Activated CD4-positive, alpha-beta T cell treated with anti-CD3 and anti-CD28 coated beads, Interleukin-2, amount 10 ng/mL, durations not matched to agents 24 days and 14 days (primary cell): ENCODE measurements at regions of chr7 and their contacts with region 1.

Region 1: GRCh38 chr7:7761340-7761980 is 43.1 kb upstream of the RPA3 start:
- DNase-seq: peak; percentile 59
- H3K4me3 Mint-ChIP-seq: peak overlapping the region; percentile 92
- H3K27ac Mint-ChIP-seq: peak overlapping the region; percentile 88
- H3K4me1 Mint-ChIP-seq: peaks cover 30% of the 10 kb centered on the region
- H3K27me3 Mint-ChIP-seq: no peaks in the 10 kb centered on the region

Region 2: DNA sequence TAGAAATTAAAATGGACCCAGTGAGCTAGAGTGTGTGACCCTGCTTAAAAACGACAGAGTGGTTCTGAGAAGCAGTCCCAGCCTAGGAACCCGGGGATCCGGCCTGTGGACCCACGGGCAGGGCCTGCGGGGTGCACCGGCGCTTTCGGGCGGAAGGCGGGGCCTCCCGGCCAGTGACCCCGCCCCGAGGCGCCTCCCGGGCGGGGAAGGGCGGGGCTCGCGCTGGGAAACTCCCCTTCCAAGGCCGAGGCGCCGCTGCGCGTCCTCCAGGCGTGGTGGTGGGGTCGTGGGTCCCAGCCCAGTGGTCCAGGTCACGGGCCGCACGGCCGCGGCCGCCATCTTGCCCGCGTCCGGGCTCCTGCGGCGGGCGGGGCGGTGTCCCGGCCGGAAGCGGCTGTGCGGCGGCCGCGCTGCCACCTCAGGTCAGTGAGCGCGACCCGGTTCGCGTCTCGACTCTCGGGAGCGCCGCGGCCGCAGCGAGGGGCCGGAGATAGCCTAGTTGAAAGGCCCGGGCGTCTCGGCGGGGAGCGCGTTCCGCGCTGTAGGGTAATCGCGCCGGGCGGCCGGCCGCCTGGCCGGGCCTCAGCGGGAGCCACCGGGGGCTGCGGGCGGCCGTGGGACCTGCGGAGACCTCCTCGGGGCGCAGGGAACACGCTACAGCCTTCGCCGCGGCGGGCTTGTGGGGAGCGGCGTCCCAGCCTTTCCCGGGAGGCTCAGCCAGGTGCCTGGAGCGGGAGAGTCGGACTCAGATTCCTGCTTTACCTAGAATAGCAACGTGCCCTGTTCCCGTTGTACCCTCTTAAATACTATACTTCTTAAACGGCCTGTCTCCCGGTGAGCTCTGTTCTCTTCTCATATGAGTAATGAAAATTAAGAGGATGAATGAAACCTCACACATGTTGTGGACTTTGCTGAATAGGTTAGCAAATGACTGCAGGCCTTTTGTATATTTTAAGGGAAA is 194.5 kb before region 1 on chr7 and contains the start of gene MIOS:
- intact Hi-C with region 1: no loop called
- DNase-seq: peak; percentile 96
- H3K4me3 Mint-ChIP-seq: peak within 1 kb of the TSS; percentile 84
- H3K27ac Mint-ChIP-seq: peak within 1 kb of the TSS; percentile 79
- H3K4me1 Mint-ChIP-seq: peaks cover 23% of the 10 kb centered on the region
- H3K27me3 Mint-ChIP-seq: no peaks in the 10 kb centered on the region
- total RNA-seq, gene MIOS: 33.3 and 34.7 TPM in 2 replicates

Region 3: DNA sequence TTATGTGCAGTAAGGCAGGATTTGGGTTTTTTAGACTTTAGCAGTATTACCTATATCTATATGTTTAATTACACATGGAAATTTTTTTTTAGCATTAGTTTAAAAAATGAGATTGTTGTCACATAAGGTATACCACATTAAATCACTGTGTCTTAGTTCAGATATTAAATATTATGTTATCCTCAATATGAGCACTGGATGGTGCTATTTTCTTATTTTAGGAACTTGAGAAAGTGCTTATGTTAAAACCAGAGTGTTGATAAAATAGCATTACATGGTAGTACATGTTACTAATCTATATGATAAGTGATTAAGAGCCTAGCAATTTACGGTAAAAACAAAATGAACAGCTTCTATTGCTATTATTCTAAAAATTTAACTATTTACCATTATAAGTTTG is 166.0 kb before region 1 on chr7:
- intact Hi-C with region 1: loop called (anchors 2 kb)
- DNase-seq: no peak
- H3K4me3 Mint-ChIP-seq: no peak overlapping the region
- H3K27ac Mint-ChIP-seq: no peak overlapping the region
- H3K4me1 Mint-ChIP-seq: peaks cover 3% of the 10 kb centered on the region
- H3K27me3 Mint-ChIP-seq: no peaks in the 10 kb centered on the region

Region 4: DNA sequence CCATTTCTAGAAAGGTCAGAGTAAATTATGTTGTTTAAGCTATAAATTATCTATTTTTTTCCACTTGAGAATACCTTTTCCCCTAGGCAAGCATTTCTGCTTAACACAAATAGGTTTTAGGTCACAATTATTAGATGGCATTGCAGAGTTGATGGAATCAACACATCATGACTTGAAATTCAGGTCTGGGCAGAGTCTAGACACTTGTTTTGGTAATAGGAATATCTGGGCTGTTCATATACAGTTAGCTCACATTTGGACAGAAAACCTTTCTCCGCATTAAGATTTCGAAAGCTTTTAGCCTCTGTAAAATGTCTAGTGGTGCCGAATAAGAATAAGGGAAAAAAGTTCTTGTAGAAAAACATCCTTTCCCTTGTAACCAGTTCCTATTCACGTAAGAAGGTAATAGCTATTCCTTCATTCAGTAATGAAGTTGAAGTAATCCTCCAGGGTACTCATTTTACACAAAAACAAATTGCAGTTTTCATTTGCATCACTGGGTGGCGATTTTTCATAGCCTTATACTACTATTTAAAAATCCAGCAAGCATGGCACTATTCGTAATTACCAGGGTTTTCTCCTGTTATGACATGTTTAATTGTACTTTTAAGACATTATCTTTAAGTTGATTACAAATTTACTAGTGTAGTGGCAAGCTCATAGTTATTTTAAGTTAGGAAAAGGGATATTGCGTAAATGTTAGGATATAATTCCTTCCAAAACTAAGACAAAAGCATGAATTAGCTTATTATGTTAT is 80.1 kb before region 1 on chr7:
- intact Hi-C with region 1: loop called (anchors 1 kb)
- DNase-seq: peak; percentile 84
- H3K4me3 Mint-ChIP-seq: no peak overlapping the region
- H3K27ac Mint-ChIP-seq: no peak overlapping the region
- H3K4me1 Mint-ChIP-seq: peaks cover 8% of the 10 kb centered on the region
- H3K27me3 Mint-ChIP-seq: no peaks in the 10 kb centered on the region

Region 5: GRCh38 chr7:7772397-7772821 is 10.9 kb after region 1 on chr7:
- intact Hi-C with region 1: loop called (anchors 1 kb)
- DNase-seq: peak; percentile 65
- H3K4me3 Mint-ChIP-seq: peak overlapping the region; percentile 49
- H3K27ac Mint-ChIP-seq: peak overlapping the region; percentile 73
- H3K4me1 Mint-ChIP-seq: peaks cover 12% of the 10 kb centered on the region
- H3K27me3 Mint-ChIP-seq: peaks cover 2% of the 10 kb centered on the region

Region 6: DNA sequence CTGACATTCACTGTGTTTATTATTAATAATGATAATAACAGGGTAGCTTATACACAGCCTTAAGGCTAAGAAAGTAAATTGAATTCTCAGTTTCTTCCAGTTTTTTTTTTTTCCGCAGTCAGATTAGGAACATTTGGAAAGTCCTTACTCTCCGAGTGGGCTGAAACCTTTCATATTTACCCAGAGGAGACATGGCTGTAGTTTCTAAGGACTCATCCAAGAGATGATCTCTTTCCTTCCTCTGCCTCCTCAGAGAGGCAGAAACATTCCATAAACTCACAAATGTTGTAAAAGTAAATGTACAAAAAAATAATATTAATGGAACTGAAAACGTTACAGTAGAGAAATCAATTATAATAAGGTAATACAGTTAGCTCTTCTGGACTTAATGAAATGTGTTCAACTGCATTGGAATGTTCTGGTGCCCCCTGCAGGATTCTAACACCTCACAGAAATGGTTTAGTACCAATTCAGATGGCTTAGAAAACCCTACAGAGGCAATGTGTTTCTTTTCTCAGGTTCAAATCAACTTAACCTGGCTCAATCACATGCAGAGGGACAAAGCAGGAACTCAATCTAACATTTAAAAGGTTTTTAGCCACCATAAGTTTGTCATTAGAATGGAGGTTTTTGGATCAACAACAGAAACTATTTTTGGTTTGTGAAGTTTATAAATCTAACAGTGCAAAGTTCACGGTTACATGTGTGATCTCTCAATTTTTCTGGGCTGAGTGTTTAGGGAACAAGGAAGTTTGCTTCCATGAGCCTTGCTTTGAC is 428.8 kb after region 1 on chr7:
- intact Hi-C with region 1: loop called (anchors 2 kb)
- DNase-seq: peak; percentile 89
- H3K4me3 Mint-ChIP-seq: no peak overlapping the region
- H3K27ac Mint-ChIP-seq: no peak overlapping the region
- H3K4me1 Mint-ChIP-seq: peaks cover 31% of the 10 kb centered on the region
- H3K27me3 Mint-ChIP-seq: peaks cover 5% of the 10 kb centered on the region